ENCODE measurements at regions of chr9 and their contacts with region 1.

Region 1: DNA sequence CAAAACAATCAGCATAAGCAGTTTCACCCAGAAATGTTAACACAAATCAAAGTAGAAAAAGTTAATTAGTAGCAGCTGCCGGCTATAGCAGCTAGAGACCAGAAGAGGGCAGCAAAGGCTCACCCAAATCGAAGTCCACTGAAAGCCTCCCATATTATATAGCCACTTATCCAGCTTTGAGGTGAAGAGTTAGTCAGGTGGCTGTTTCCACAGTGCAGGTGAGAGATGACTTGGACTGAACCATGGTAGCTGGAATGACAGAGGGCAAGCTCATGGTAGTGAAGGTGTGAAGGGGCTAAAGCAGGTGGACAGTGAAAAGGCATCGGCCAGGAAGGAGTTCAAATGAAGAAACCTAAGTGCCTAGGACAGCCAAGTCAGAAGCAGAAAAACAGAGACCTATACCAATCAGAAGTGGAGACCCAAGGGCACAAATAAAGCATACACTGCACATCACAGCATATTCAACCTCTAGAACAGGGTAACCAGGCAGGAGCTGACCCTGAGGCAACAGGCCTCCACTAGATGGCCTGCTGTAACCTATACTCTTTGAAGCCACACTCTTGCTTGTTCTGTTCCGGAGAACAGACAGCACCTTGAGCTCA is 7.2 kb upstream of the RNF38 start:
- DNase-seq: peak in 1 of 2 donors; percentile 18
- ATAC-seq: peak; percentile 84 to 92 (median 87)
- H3K4me3 ChIP-seq: no peak overlapping the region
- H3K27ac ChIP-seq: no peak overlapping the region
- H3K4me1 ChIP-seq: peaks cover 6% of the 10 kb centered on the region
- H3K27me3 ChIP-seq: no peaks in the 10 kb centered on the region
- CTCF ChIP-seq: peak; percentile 94

Region 2: GRCh38 chr9:35935755-35936509 is 471.3 kb before region 1 on chr9:
- intact Hi-C with region 1: no loop called
- DNase-seq: no peak
- ATAC-seq: no peak
- H3K4me3 ChIP-seq: no peak overlapping the region
- H3K27ac ChIP-seq: no peak overlapping the region
- H3K4me1 ChIP-seq: no peaks in the 10 kb centered on the region
- H3K27me3 ChIP-seq: peaks cover 0 to 2% (median 0%) of the 10 kb centered on the region in 3 donors
- CTCF ChIP-seq: no peak

Region 3: GRCh38 chr9:36345103-36345849 is 61.9 kb before region 1 on chr9:
- intact Hi-C with region 1: no loop called
- DNase-seq: no peak
- ATAC-seq: no peak
- H3K4me3 ChIP-seq: no peak overlapping the region
- H3K27ac ChIP-seq: no peak overlapping the region
- H3K4me1 ChIP-seq: no peaks in the 10 kb centered on the region
- H3K27me3 ChIP-seq: no peaks in the 10 kb centered on the region
- CTCF ChIP-seq: no peak

Region 4: DNA sequence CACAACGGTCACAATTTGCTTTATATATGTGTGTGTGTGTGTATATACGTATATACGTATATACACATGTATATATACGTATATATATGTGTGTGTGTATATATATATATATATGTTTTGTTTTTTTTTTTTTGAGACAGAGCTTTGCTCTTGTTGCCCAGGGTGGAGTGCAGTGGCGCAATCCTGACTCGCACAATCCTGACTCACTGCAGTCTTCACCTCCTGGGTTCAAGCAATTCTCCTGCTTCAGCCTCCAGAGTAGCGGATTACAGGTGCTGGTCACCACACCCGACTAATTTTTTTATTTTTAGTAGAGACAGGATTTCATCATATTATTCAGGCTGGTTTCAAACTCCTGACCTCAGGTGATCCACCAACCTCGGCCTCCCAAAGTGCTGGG is 10.2 kb before region 1 on chr9:
- intact Hi-C with region 1: no loop called
- DNase-seq: no peak
- ATAC-seq: no peak
- H3K4me3 ChIP-seq: no peak overlapping the region
- H3K27ac ChIP-seq: peak overlapping the region; percentile 95
- H3K4me1 ChIP-seq: peaks cover 70% of the 10 kb centered on the region
- H3K27me3 ChIP-seq: no peaks in the 10 kb centered on the region
- CTCF ChIP-seq: no peak

Region 5: DNA sequence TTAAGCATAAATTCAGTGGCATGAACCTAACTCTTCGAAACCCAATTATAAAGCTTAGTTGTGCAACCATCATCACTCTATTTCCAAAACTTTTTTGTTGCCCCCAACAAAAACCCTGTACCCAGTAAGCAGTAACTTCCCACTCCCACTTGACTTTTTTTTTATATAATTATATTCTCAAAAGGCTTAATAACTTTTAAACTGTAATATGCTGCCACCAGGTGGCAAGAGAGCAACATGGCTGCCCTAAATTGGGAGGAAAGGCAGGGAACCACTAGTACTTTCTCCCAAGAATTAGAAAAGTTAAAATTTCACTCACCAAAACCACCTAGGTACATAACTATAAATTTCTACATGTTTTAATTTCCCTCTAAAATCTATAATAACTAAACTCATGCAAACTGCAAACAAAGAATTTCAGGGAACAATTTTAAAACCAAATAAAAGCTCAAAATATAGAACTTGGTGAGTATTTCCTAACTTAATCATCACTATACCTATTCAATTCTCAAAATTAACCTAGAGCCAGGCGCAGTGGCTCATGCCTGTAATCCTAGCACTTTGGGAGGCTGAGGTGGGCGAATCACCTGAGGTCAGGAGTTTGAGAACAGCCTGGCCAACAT is 43.0 kb after region 1 on chr9:
- intact Hi-C with region 1: loop called (anchors 2 to 5 kb)
- DNase-seq: no peak
- ATAC-seq: peak in 1 of 4 donors; percentile 52
- H3K4me3 ChIP-seq: no peak overlapping the region
- H3K27ac ChIP-seq: no peak overlapping the region
- H3K4me1 ChIP-seq: peaks cover 8% of the 10 kb centered on the region
- H3K27me3 ChIP-seq: no peaks in the 10 kb centered on the region
- CTCF ChIP-seq: peak; percentile 60

Region 6: DNA sequence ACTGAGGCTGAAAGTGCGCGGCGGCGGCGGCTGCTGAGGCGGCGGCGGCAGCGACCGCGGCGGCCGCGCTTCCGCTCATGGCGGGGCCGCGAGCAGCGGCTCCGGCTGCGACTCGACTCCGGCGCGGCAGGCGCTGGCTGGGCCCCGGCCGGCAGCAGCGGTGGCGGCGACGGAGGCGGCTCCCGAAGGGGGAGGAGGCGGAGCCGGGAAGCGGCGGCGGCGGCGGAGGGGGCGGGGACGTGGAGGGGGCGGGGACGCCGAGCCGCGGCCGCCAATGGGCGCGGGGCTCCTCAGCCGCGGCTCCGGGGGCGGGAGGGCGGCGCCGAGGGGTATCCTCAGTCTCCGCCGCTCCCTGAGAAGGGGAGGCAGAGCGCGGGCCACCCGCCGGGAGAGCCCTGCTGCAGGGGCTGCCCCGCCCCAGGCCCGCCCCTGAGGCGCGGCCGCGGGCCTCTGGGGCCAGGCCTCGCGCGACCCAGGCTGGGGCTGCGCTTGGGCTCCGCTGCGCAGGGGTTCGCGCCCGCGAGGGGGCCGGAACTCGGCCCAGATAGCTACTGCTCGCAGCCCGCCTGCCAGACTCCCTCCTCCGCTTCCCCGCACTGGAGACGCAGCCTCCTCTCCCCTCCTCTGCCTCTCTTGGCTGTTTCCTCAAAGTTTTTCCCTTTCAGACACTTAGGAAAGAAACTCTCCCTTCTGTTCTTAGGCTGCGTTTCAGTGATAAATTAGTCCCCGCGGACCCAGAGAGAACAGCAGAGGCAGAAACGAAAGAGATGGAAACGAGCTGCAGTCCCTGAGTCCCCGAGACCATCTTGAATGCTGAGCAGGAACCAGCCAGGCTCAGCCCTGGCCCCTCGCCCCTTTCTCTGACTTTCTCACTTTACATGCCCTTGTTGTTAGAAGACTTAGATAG is 80.5 kb after region 1 on chr9:
- intact Hi-C with region 1: loop called in 1 of 2 experiments (anchors 5 kb)
- DNase-seq: peak; percentile 94 to 95
- ATAC-seq: peak; percentile 96 to 98 (median 98)
- H3K4me3 ChIP-seq: peak overlapping the region; percentile 99
- H3K27ac ChIP-seq: peak overlapping the region; percentile 86
- H3K4me1 ChIP-seq: peaks cover 24% of the 10 kb centered on the region
- H3K27me3 ChIP-seq: no peaks in the 10 kb centered on the region
- CTCF ChIP-seq: peak; percentile 3

Region 7: GRCh38 chr9:36560857-36561221 is 153.6 kb after region 1 on chr9:
- intact Hi-C with region 1: loop called (anchors 1 to 5 kb)
- DNase-seq: no peak
- ATAC-seq: no peak
- H3K4me3 ChIP-seq: no peak overlapping the region
- H3K27ac ChIP-seq: no peak overlapping the region
- H3K4me1 ChIP-seq: no peaks in the 10 kb centered on the region
- H3K27me3 ChIP-seq: no peaks in the 10 kb centered on the region
- CTCF ChIP-seq: no peak

Region 8: DNA sequence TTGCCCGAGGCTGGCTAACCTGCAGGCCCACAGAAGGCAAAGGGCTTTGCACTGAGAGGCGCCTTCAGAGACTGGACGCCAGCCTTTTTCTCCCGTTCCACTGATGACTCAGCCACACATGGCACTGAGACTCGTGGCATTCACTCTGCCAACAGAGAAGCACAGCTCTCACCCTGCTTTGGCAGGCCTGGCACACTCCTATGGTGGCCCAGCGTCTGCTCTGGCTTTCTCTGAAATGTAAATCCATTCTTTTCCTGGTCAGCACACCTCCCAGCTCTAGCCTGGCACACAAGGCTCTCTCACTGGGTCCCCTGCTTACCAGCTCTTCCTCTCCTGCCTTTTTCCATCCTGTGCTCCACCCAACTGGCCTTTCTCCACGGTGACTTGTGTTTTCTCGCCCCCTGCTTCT is 159.6 kb after region 1 on chr9:
- intact Hi-C with region 1: loop called in 1 of 2 experiments (anchors 5 kb)
- DNase-seq: peak in 1 of 2 donors; percentile 47
- ATAC-seq: peak; percentile 79 to 94 (median 92)
- H3K4me3 ChIP-seq: no peak overlapping the region
- H3K27ac ChIP-seq: peak overlapping the region; percentile 48
- H3K4me1 ChIP-seq: no peaks in the 10 kb centered on the region
- H3K27me3 ChIP-seq: no peaks in the 10 kb centered on the region
- CTCF ChIP-seq: no peak